ENCODE measurements at regions of chr12 and their contacts with region 1.

Region 1: GRCh38 chr12:9039397-9039977 is 50.1 kb downstream of the KLRG1 start:
- DNase-seq: peak; percentile 47
- ATAC-seq: peak; percentile 67
- H3K4me3 ChIP-seq: no peak overlapping the region
- H3K27ac ChIP-seq: no peak overlapping the region
- H3K4me1 ChIP-seq: peaks cover 7% of the 10 kb centered on the region
- H3K27me3 ChIP-seq: no peaks in the 10 kb centered on the region
- CTCF ChIP-seq: peak; percentile 78
- EP300 ChIP-seq: no peak
- POLR2A ChIP-seq: no peak
- RAD21 ChIP-seq: peak; percentile 33; the same call in 1 of the 2 replicates

Region 2: DNA sequence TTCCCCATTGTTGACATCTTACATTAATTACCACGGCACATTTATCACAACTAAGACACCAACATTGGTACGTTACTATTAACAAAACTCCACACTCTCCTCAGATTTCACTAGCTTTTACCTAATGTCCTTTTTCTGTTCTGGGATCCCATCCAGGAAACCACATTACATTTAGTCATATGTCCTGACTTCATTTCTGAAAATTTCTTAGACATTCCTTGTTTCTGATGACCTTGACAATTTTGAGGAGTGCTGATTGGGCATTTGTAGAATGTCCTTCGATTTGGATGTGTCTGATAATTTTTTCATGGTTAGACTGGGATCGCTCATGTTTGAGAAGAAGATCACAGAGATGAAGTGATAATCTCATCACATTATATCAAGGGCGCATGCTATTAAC is 1770.2 kb before region 1 on chr12:
- CTCF ChIA-PET with region 1: no interaction called
- POLR2A ChIA-PET with region 1: no interaction called
- in situ Hi-C with region 1: no loop called
- intact Hi-C with region 1: no loop called
- DNase-seq: no peak
- ATAC-seq: no peak
- H3K4me3 ChIP-seq: no peak overlapping the region
- H3K27ac ChIP-seq: no peak overlapping the region
- H3K4me1 ChIP-seq: no peaks in the 10 kb centered on the region
- H3K27me3 ChIP-seq: no peaks in the 10 kb centered on the region; a peak in 1 of 5 replicates
- CTCF ChIP-seq: no peak
- EP300 ChIP-seq: no peak
- POLR2A ChIP-seq: no peak
- RAD21 ChIP-seq: no peak

Region 3: DNA sequence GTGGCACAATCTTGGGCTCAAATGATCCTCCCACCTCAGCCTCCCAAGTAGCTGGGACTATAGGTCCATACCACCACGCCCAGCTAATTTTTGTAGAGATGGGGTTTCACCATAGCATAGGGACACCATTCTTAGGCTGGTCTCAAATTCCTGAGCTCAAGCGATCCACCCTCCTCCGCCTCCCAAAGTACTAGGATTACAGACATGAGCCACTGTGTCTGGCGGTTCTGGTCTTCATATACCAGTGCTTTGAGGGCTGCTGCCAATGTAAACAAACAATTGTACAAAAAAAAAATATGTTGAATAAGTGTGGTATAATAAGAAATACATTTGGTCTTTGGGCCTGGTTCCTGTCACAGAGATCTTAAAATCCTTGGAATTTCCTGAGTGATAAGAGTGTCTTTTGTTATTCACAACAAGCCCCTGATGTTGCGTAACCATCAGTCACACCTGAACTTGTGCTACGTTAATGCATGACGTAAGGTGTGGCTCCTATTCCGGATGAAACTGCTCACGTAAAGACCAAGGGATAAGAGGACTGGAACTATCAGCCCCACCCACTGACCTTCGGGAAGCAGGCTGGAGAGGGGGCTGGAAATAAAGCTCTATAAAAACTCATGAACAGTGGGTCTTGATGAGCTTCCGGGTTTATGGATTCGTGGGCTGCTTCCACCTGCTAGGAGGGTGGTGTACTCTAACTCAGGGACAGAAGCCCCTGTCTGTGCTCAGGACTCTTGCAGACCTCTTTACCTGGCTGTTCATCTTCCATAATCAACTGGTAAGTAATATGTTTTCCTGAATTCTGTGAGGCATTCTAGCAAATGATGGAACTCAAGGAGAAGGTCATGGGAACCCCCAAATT is 358.2 kb before region 1 on chr12:
- CTCF ChIA-PET with region 1: interaction called, 15 read pairs
- POLR2A ChIA-PET with region 1: interaction called, 3 read pairs
- in situ Hi-C with region 1: loop called (anchors 5 kb)
- intact Hi-C with region 1: no loop called
- DNase-seq: no peak
- ATAC-seq: no peak
- H3K4me3 ChIP-seq: no peak overlapping the region
- H3K27ac ChIP-seq: no peak overlapping the region
- H3K4me1 ChIP-seq: no peaks in the 10 kb centered on the region
- H3K27me3 ChIP-seq: 0 out of 5 replicates have a peak, but pooled peaks cover 0 to 2% of the 10 kb centered on the region in 2 experiments
- CTCF ChIP-seq: no peak
- EP300 ChIP-seq: no peak
- POLR2A ChIP-seq: no peak
- RAD21 ChIP-seq: no peak

Region 4: DNA sequence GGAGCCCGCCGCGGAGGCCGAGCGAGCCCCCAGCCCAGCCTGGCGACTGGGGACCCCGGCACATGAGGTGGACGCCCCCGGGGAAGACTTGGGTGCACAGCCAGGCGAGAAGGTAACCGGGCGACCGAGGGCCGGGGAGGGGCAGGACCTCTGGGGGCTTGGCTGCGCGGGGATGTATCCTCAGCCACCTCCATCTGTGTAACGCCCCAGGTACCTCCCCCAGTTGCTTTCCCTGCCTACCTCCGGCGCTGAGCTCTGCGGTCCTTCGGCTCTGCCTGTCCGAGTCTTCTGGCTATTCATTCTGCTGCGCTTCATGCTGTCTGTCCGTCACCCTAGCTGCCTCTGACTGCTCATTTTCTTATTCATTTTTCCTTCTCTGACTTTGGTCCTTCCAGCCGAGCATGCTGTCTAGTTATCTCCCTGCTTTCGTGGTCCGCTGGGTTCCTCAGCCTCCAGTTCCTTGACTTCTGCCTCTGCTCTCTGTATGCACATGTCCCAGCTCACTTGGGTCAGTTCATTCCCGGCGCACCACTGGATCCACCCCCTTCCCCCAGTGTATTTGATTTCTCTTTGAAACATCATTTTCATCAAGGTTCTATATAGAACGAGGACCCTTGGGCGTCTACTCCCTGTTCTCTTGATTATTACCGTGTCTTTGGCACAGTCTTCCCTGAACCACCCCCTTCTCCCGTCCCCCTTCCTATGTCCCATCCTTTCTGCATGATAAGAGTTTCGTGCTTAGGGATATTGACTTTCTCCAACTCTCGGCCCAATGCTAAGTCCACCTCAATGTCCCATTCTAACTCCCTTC is 124.6 kb before region 1 on chr12:
- CTCF ChIA-PET with region 1: no interaction called
- POLR2A ChIA-PET with region 1: no interaction called
- in situ Hi-C with region 1: no loop called
- intact Hi-C with region 1: loop called (anchors 5 kb)
- DNase-seq: peak; percentile 24
- ATAC-seq: peak; percentile 90
- H3K4me3 ChIP-seq: peak overlapping the region; percentile 76 to 96 (median 79)
- H3K27ac ChIP-seq: no peak overlapping the region
- H3K4me1 ChIP-seq: peaks cover 27% of the 10 kb centered on the region
- H3K27me3 ChIP-seq: no peaks in the 10 kb centered on the region; a peak in 1 of 5 replicates
- CTCF ChIP-seq: no peak
- EP300 ChIP-seq: no peak
- POLR2A ChIP-seq: no peak
- RAD21 ChIP-seq: no peak

Region 5: DNA sequence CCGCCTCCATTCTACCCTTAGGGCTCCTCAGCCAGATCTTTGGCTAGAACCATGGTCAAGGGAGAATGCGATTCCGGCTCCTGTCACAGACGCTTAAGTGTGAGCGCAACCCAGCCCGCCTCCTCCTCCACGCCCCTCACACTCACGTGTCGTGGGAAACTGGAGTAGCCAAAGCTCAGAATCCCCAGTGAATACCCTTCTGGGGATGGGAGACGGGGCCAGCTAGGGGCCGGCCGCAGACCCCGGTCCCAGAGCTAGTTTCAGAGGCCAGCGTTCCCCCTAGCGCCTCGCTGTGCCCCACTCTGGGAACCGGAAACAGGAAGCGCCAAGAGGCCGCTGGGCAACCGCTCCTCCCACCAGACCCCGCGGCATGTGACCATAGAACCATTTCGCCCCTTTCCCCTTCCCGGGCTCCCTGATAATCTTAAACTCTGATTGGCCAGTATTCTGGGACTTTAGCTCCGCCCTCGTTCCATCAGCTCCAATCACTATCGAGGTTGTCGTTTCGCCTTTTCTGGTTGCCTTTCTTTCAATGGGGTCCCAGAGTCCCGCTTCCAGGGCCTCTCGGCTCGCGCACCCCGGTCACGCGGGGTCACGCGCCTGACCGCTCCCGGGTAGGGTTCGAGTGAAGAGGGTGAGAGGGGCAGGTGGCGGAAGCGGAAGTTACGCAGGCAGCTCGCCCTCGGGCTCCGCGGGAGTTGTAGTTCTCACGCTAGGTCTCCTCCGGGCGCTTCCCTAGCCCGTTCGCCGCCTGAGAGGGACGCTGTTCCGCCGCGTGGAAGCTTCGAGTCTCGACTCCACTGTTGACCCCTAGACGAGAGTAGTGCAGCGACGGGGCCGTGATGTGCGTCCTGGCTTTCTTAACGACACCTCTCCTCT is 89.9 kb before region 1 on chr12 and contains the start of gene M6PR:
- CTCF ChIA-PET with region 1: interaction called, 5 read pairs
- POLR2A ChIA-PET with region 1: no interaction called
- in situ Hi-C with region 1: loop called (anchors 25 kb)
- intact Hi-C with region 1: loop called (anchors 1 kb)
- DNase-seq: peak; percentile 97
- ATAC-seq: peak; percentile 95
- H3K4me3 ChIP-seq: peak within 1 kb of the TSS; percentile 81 to 89 (median 86)
- H3K27ac ChIP-seq: peak within 1 kb of the TSS; percentile 93
- H3K4me1 ChIP-seq: peaks cover 30% of the 10 kb centered on the region
- H3K27me3 ChIP-seq: no peaks in the 10 kb centered on the region; a peak in 1 of 5 replicates
- CTCF ChIP-seq: peak; percentile 93
- EP300 ChIP-seq: peak in 1 of 2 experiments; percentile 11; a peak in 1 of 4 replicates
- POLR2A ChIP-seq: peak; percentile 78 to 88
- RAD21 ChIP-seq: peak; percentile 74
- total RNA-seq, gene M6PR: 68.5 and 127 TPM in 2 replicates